ENCODE measurements at regions of chr1 and their contacts with region 1.

Region 1: GRCh38 chr1:84090447-84091245 is 53.4 kb upstream of the PRKACB start:
- DNase-seq: peak in 7 of 9 donors; percentile 26 to 58 (median 43)
- ATAC-seq: peak; percentile 70
- H3K4me3 ChIP-seq: peak overlapping the region; percentile 51
- H3K4me3 Mint-ChIP-seq: peak overlapping the region; percentile 65 to 89 (median 79)
- H3K27ac ChIP-seq: peak overlapping the region; percentile 67
- H3K27ac Mint-ChIP-seq: peak overlapping the region; percentile 10 to 97 (median 83)
- H3K4me1 ChIP-seq: peaks cover 7 to 14% of the 10 kb centered on the region in 2 donors
- H3K4me1 Mint-ChIP-seq: peaks cover 6 to 29% (median 23%) of the 10 kb centered on the region in 7 donors
- H3K27me3 ChIP-seq: no peaks in the 10 kb centered on the region
- H3K27me3 Mint-ChIP-seq: peaks cover 0 to 14% (median 0%) of the 10 kb centered on the region in 5 donors

Region 2: GRCh38 chr1:83998498-83999315 is 91.9 kb before region 1 on chr1 and contains the start of gene TTLL7:
- CTCF ChIA-PET with region 1: no interaction called
- POLR2A ChIA-PET with region 1: no interaction called
- intact Hi-C with region 1: loop called in 1 of 2 experiments (anchors 5 kb)
- DNase-seq: peak; percentile 10 to 75 (median 23)
- ATAC-seq: peak; percentile 81
- H3K4me3 ChIP-seq: peak within 1 kb of the TSS; percentile 53
- H3K4me3 Mint-ChIP-seq: peak within 1 kb of the TSS; percentile 74 to 92 (median 85)
- H3K27ac ChIP-seq: no peak within 1 kb of the TSS
- H3K27ac Mint-ChIP-seq: peak within 1 kb of the TSS in 2 of 9 donors; percentile 56 to 58
- H3K4me1 ChIP-seq: peaks cover 6 to 7% of the 10 kb centered on the region in 2 donors
- H3K4me1 Mint-ChIP-seq: peaks cover 9 to 20% (median 17%) of the 10 kb centered on the region in 7 donors
- H3K27me3 ChIP-seq: peaks cover 4 to 13% of the 10 kb centered on the region in 2 donors
- H3K27me3 Mint-ChIP-seq: peaks cover 61 to 78% (median 68%) of the 10 kb centered on the region in 5 donors
- total RNA-seq, gene TTLL7: 0.27 to 2.1 (median 1.1) TPM in 3 of 5 experiments, not detected in the others

Region 3: DNA sequence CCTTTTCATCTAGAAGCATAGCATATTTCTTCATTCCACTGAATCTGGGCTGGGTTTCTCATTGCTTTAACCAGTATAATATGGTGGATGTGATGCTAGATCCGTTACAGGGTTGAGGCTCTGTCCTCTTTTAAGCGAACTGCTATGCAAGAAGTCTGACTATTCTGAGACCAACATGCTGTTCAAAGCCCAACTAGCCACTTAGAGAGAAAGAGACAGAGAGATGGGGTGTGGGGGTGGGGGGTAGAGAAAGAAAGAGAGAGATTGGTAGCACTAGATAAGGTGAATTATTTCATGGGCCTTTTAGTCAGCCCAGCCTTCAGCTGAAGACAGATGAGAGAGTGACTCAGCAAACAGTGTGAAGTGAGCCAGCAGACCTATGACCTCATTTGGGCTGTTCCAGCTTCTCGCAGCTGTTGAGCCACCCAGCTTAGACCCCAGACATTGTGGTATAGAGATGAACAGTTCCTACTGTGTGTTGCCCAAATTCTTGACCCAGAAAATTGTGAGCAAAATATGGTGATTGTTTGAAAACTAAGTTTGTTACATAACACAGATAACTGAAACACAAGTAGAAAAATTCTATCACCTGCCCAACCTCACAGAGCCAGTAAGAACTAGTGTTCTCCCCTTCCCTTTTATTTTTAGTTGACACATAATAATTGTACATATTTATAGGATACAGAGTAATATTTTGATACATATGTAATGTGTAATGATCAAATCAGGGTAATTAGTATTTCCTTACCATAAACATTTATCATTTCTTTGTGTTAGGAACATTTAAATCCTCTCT is 12.7 kb after region 1 on chr1:
- CTCF ChIA-PET with region 1: no interaction called
- POLR2A ChIA-PET with region 1: no interaction called
- intact Hi-C with region 1: loop called in 1 of 2 experiments (anchors 2 kb)
- DNase-seq: no peak
- ATAC-seq: peak; percentile 63
- H3K4me3 ChIP-seq: no peak overlapping the region
- H3K4me3 Mint-ChIP-seq: no peak overlapping the region
- H3K27ac ChIP-seq: no peak overlapping the region
- H3K27ac Mint-ChIP-seq: peak overlapping the region in 1 of 9 donors; percentile 33
- H3K4me1 ChIP-seq: no peaks in the 10 kb centered on the region
- H3K4me1 Mint-ChIP-seq: peaks cover 0 to 4% (median 0%) of the 10 kb centered on the region in 7 donors
- H3K27me3 ChIP-seq: no peaks in the 10 kb centered on the region
- H3K27me3 Mint-ChIP-seq: peaks cover 0 to 3% (median 0%) of the 10 kb centered on the region in 5 donors

Region 4: GRCh38 chr1:84152649-84153056 is 62.0 kb after region 1 on chr1:
- CTCF ChIA-PET with region 1: no interaction called
- POLR2A ChIA-PET with region 1: no interaction called
- intact Hi-C with region 1: no loop called
- DNase-seq: no peak
- ATAC-seq: no peak
- H3K4me3 ChIP-seq: no peak overlapping the region
- H3K4me3 Mint-ChIP-seq: peak overlapping the region in 9 of 10 donors; percentile 26 to 78 (median 48)
- H3K27ac ChIP-seq: no peak overlapping the region
- H3K27ac Mint-ChIP-seq: peak overlapping the region in 7 of 9 donors; percentile 10 to 70 (median 53)
- H3K4me1 ChIP-seq: peaks cover 34 to 65% of the 10 kb centered on the region in 2 donors
- H3K4me1 Mint-ChIP-seq: peaks cover 64 to 92% (median 88%) of the 10 kb centered on the region in 7 donors
- H3K27me3 ChIP-seq: no peaks in the 10 kb centered on the region
- H3K27me3 Mint-ChIP-seq: no peaks in the 10 kb centered on the region

Region 5: DNA sequence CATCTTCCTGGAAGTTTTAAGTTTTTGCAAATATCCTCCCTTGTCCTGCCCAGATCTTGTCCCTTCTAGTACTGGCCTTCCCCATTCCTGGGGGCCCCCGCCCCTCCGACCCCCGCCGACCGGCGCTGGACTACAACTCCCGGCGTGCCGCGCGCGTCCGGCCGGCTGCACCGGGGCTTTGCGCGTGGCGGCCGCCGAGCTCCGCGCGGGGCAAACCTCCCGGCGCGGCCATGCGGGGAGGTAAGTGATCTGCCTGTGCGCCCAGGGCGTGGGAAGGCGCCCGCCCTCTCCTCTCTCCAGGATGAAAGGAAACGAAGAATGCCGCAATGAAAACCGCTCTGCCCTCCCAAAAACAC is 207.7 kb after region 1 on chr1:
- CTCF ChIA-PET with region 1: no interaction called
- POLR2A ChIA-PET with region 1: no interaction called
- intact Hi-C with region 1: loop called in 1 of 2 experiments (anchors 5 kb)
- DNase-seq: peak; percentile 40 to 65 (median 46)
- ATAC-seq: peak; percentile 88
- H3K4me3 ChIP-seq: peak overlapping the region; percentile 92
- H3K4me3 Mint-ChIP-seq: peak overlapping the region; percentile 83 to 95 (median 90)
- H3K27ac ChIP-seq: peak overlapping the region; percentile 69
- H3K27ac Mint-ChIP-seq: peak overlapping the region; percentile 67 to 85 (median 79)
- H3K4me1 ChIP-seq: peaks cover 4 to 25% of the 10 kb centered on the region in 2 donors
- H3K4me1 Mint-ChIP-seq: peaks cover 17 to 52% (median 42%) of the 10 kb centered on the region in 7 donors
- H3K27me3 ChIP-seq: no peaks in the 10 kb centered on the region
- H3K27me3 Mint-ChIP-seq: peaks cover 0 to 16% (median 6%) of the 10 kb centered on the region in 5 donors